ENCODE measurements at regions of chr6 and their contacts with region 1.

Region 1: GRCh38 chr6:9412951-9413559 is 977.7 kb upstream of the SLC35B3 start:
- DNase-seq: peak in 1 of 2 donors; percentile 48
- ATAC-seq: peak in 1 of 4 donors; percentile 61
- H3K4me3 ChIP-seq: no peak overlapping the region
- H3K27ac ChIP-seq: no peak overlapping the region
- H3K4me1 ChIP-seq: no peaks in the 10 kb centered on the region
- H3K27me3 ChIP-seq: no peaks in the 10 kb centered on the region
- CTCF ChIP-seq: peak; percentile 58

Region 2: GRCh38 chr6:8707956-8708772 is 704.9 kb before region 1 on chr6:
- intact Hi-C with region 1: loop called in 1 of 2 experiments (anchors 10 kb)
- DNase-seq: no peak
- ATAC-seq: peak in 1 of 4 donors; percentile 55
- H3K4me3 ChIP-seq: no peak overlapping the region
- H3K27ac ChIP-seq: no peak overlapping the region
- H3K4me1 ChIP-seq: no peaks in the 10 kb centered on the region
- H3K27me3 ChIP-seq: no peaks in the 10 kb centered on the region
- CTCF ChIP-seq: peak; percentile 13

Region 3: GRCh38 chr6:8983188-8983688 is 429.8 kb before region 1 on chr6:
- intact Hi-C with region 1: loop called (anchors 5 to 10 kb)
- DNase-seq: peak; percentile 34 to 58
- ATAC-seq: peak; percentile 70 to 81 (median 72)
- H3K4me3 ChIP-seq: no peak overlapping the region
- H3K27ac ChIP-seq: no peak overlapping the region
- H3K4me1 ChIP-seq: no peaks in the 10 kb centered on the region
- H3K27me3 ChIP-seq: peaks cover 0 to 2% (median 0%) of the 10 kb centered on the region in 3 donors
- CTCF ChIP-seq: peak; percentile 89

Region 4: GRCh38 chr6:9250852-9251251 is 162.2 kb before region 1 on chr6:
- intact Hi-C with region 1: loop called in 1 of 2 experiments (anchors 5 kb)
- DNase-seq: no peak
- ATAC-seq: no peak
- H3K4me3 ChIP-seq: no peak overlapping the region
- H3K27ac ChIP-seq: no peak overlapping the region
- H3K4me1 ChIP-seq: no peaks in the 10 kb centered on the region
- H3K27me3 ChIP-seq: no peaks in the 10 kb centered on the region
- CTCF ChIP-seq: peak; percentile 39

Measured in psoas muscle (tissue), 8 donors.